ENCODE measurements at regions of chr2 and their contacts with region 1.

Region 1: DNA sequence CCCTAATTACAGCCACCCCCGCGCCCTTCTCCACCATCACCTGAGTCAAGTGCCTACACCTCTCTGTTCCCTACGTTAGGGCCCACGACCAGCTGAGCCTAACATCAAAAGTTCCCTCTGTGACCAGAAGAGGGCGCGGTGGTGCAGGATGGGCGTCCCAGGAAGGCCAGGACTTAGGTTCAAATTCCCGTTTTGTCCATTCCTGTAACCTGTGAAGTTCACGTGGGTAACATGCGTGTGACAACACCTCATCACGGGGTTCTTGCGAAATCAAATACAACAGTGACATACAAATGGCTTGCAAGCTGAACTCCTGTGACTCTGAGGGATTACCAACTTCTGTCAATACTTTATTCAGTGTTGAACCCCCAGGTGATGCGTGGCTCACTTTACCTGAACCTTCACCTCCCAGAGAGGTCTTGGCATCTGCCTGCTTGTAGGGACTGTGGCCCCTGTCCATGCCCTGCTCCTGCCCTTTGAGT is 207.9 kb downstream of the ARL4C start:
- DNase-seq: peak; percentile 62
- ATAC-seq: peak in 1 of 2 donors; percentile 19

Region 2: GRCh38 chr2:234071664-234072063 is 217.4 kb before region 1 on chr2:
- intact Hi-C with region 1: no loop called
- DNase-seq: no peak
- ATAC-seq: no peak

Region 3: GRCh38 chr2:234135720-234136221 is 153.2 kb before region 1 on chr2:
- intact Hi-C with region 1: loop called in 1 of 2 experiments (anchors 10 kb)
- DNase-seq: peak; percentile 49
- ATAC-seq: peak; percentile 72 to 91

Region 4: DNA sequence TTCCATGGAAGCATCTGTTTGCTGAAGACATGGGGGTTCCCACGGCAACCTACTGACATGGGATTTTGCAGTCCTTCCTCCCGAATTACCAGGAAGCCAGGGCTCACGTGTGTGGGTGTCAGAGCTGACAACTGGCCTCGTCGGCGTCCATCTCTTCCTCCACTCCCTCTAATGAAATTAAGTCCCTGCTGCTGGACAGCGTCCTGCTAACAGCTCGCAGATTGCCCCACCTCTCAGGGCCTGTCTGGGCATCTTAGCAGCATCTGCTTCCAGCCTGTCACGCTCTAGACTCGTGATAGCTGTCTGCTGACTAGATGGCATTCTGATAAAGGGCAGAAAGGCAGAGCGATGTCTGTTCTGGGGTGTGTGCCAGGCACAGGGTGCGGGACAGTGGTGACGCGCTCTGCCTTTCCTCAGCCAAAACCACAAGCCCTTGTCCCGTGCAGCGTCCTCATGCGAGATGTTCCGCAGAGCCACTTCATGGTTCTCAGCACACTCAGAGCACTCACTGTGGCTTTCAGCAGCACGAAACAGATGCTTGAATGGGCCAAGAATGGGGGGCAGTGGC is 46.7 kb after region 1 on chr2:
- intact Hi-C with region 1: loop called in 1 of 2 experiments (anchors 2 kb)
- DNase-seq: peak; percentile 82
- ATAC-seq: peak; percentile 90 to 95

Region 5: GRCh38 chr2:234500394-234501006 is 211.5 kb after region 1 on chr2:
- intact Hi-C with region 1: loop called (anchors 2 to 5 kb)
- DNase-seq: peak; percentile 46
- ATAC-seq: peak; percentile 20 to 61

Measured in left cardiac atrium (tissue), 4 donors.